ENCODE measurements at regions of chr19 and their contacts with region 1.

Region 1: DNA sequence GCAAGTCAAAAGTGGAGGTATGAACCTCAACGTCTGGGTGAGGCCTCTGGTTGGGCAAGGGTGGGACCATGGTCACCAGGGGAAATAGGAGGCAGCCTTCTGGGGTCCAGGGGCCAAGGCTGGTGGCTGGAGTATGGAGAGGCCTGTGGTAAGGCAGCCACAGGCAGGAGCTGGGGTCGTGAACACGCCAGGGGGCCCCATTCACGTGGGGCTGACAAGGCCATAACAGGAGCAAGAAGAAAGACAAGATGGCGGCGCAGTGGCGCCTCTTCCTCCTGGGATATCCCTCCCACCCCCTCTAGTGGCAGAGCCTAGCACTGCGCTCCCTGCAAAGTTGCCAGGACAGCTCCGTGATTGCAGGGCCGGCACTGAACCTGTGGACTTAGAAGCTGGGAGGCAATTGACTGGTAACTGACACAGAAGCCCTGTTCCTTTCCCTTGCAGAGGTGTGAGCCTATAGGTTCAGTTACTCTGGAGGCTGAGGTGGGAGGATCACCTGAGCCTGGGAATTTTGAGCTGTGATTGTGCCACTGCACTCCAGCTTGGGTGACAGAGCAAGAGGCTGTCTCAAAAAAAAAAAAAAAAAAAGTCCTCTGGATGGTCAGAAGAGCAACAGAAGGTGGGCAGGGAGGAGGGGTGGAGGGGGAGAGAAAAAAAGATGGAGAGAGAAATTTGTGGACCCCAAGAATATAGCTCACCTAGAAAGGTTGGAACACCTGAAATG is 19.7 kb upstream of the EDDM13 start:
- DNase-seq: peak; percentile 65
- ATAC-seq: peak; percentile 97
- H3K4me3 ChIP-seq: no peak overlapping the region
- H3K27ac ChIP-seq: no peak overlapping the region
- H3K4me1 ChIP-seq: no peaks in the 10 kb centered on the region
- H3K27me3 ChIP-seq: no peaks in the 10 kb centered on the region
- CTCF ChIP-seq: peak; percentile 74
- POLR2A ChIP-seq: no peak
- RAD21 ChIP-seq: peak; percentile 58

Region 2: DNA sequence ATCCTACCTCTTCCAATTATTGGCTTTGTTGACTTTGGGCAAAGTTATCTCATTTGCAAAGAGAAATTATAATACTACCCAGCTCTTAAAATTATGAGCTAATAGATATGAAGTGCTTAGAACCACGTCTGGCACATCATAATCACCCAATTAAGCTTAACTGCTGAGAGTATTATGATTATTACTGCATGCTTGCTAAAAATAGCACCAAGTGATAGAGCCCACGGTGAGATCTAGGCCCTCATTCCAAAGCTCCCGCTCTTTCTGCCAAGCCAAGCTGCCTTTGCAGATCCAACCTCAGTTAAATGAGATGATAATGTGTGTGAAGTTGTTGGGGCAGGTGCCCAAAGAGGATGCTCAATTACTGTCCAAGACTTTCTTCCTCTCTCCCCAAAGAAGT is 13.2 kb after region 1 on chr19:
- CTCF ChIA-PET with region 1: interaction called, 13 read pairs
- POLR2A ChIA-PET with region 1: no interaction called
- dilution Hi-C with region 1: no loop called
- in situ Hi-C with region 1: no loop called
- intact Hi-C with region 1: no loop called
- DNase-seq: no peak
- ATAC-seq: no peak
- H3K4me3 ChIP-seq: no peak overlapping the region
- H3K27ac ChIP-seq: no peak overlapping the region
- H3K4me1 ChIP-seq: no peaks in the 10 kb centered on the region
- H3K27me3 ChIP-seq: no peaks in the 10 kb centered on the region
- CTCF ChIP-seq: no peak
- POLR2A ChIP-seq: no peak
- RAD21 ChIP-seq: no peak

Region 3: DNA sequence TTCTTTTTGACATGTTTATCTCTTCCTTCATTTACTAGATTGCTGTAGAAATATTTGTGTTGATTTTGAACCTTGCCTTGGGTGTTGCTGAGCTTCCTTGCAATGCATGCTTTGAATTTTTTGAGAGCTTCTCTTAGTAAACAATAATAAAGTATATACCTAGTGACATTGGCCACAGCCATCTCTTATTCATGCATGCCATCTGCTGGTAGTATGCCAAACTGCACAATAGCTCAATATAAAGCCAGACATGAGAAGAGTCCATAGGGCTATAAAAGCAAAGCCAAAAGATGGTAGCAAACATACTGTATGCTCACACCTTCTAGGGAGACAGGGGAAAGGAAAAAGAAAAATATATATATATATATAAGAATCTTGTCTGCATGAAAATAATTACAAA is 80.6 kb after region 1 on chr19:
- CTCF ChIA-PET with region 1: interaction called, 45 read pairs
- POLR2A ChIA-PET with region 1: no interaction called
- dilution Hi-C with region 1: no loop called
- in situ Hi-C with region 1: no loop called
- intact Hi-C with region 1: loop called (anchors 1 kb)
- DNase-seq: peak; percentile 56
- ATAC-seq: peak; percentile 99
- H3K4me3 ChIP-seq: no peak overlapping the region
- H3K27ac ChIP-seq: no peak overlapping the region
- H3K4me1 ChIP-seq: no peaks in the 10 kb centered on the region
- H3K27me3 ChIP-seq: no peaks in the 10 kb centered on the region
- CTCF ChIP-seq: peak; percentile 74
- POLR2A ChIP-seq: 0 out of 2 replicates have a peak, but pooled peaks have one; percentile 27
- RAD21 ChIP-seq: peak; percentile 87

Region 4: GRCh38 chr19:56350416-56351045 is 97.7 kb after region 1 on chr19:
- CTCF ChIA-PET with region 1: interaction called, 4 read pairs
- POLR2A ChIA-PET with region 1: no interaction called
- dilution Hi-C with region 1: no loop called
- in situ Hi-C with region 1: no loop called
- intact Hi-C with region 1: loop called (anchors 1 kb)
- DNase-seq: peak; percentile 41
- ATAC-seq: peak; percentile 81
- H3K4me3 ChIP-seq: no peak overlapping the region
- H3K27ac ChIP-seq: no peak overlapping the region
- H3K4me1 ChIP-seq: no peaks in the 10 kb centered on the region
- H3K27me3 ChIP-seq: no peaks in the 10 kb centered on the region
- CTCF ChIP-seq: peak; percentile 70
- POLR2A ChIP-seq: no peak
- RAD21 ChIP-seq: peak; percentile 65

Region 5: GRCh38 chr19:56383826-56384605 is 131.2 kb after region 1 on chr19:
- CTCF ChIA-PET with region 1: no interaction called
- POLR2A ChIA-PET with region 1: no interaction called
- dilution Hi-C with region 1: no loop called
- in situ Hi-C with region 1: no loop called
- intact Hi-C with region 1: no loop called
- DNase-seq: peak; percentile 22
- ATAC-seq: no peak
- H3K4me3 ChIP-seq: no peak overlapping the region
- H3K27ac ChIP-seq: no peak overlapping the region
- H3K4me1 ChIP-seq: no peaks in the 10 kb centered on the region
- H3K27me3 ChIP-seq: no peaks in the 10 kb centered on the region
- CTCF ChIP-seq: no peak
- POLR2A ChIP-seq: no peak
- RAD21 ChIP-seq: no peak

Measured in IMR-90 (cell line).